ENCODE measurements at regions of chr20 and their contacts with region 1.

Region 1: DNA sequence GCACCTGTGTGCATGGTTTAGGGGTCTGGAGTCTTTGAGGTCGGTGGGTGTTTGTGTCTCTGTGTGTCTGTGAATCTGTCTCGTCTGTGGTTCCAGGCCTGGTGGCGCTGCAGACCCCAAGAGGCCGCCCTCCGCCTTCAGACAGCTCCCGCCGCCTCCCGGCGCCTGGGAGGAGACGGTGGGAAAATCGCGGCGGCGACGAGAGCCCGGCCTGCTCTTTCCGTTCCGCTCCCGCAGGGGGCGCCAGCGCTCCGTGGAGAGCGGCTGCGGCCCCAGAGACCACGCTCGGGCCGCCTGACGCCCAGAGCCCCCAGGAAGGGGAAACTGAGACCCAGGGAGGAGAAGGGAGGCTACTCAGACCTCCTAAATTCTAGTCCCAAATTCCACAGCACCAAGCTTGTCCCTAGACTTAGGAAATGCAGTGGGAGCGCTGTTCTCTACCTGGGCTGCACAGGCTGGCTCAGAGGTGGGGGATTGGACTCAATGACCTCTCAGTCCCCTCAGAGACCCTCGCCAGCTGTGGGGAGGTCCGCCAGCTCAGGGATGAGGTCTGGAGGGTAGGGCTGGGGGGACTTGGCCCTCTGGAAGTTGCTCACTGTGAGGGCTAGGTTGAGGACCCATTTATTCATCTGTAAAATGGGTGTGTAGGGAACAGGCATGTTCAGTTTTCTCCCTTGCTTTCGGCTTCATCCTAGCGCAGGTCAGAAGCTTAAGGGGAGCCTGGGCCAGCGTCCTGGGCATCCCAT is 36.9 kb upstream of the BLCAP start:
- DNase-seq: peak; percentile 52 to 72
- H3K4me3 ChIP-seq: no peak overlapping the region
- H3K27ac ChIP-seq: no peak overlapping the region
- H3K4me1 ChIP-seq: peaks cover 4% of the 10 kb centered on the region
- H3K27me3 ChIP-seq: no peaks in the 10 kb centered on the region
- CTCF ChIP-seq: peak; percentile 37 to 58 (median 52)
- POLR2A ChIP-seq: no peak

Region 2: GRCh38 chr20:37417617-37418467 is 146.7 kb before region 1 on chr20:
- intact Hi-C with region 1: no loop called
- DNase-seq: no peak
- H3K4me3 ChIP-seq: no peak overlapping the region
- H3K27ac ChIP-seq: no peak overlapping the region
- H3K4me1 ChIP-seq: no peaks in the 10 kb centered on the region
- H3K27me3 ChIP-seq: no peaks in the 10 kb centered on the region
- CTCF ChIP-seq: no peak
- POLR2A ChIP-seq: no peak

Region 3: GRCh38 chr20:37615340-37616109 is 51.0 kb after region 1 on chr20:
- intact Hi-C with region 1: no loop called
- DNase-seq: no peak
- H3K4me3 ChIP-seq: no peak overlapping the region
- H3K27ac ChIP-seq: no peak overlapping the region
- H3K4me1 ChIP-seq: no peaks in the 10 kb centered on the region
- H3K27me3 ChIP-seq: no peaks in the 10 kb centered on the region
- CTCF ChIP-seq: peak in 1 of 3 experiments; percentile 27
- POLR2A ChIP-seq: no peak

Region 4: DNA sequence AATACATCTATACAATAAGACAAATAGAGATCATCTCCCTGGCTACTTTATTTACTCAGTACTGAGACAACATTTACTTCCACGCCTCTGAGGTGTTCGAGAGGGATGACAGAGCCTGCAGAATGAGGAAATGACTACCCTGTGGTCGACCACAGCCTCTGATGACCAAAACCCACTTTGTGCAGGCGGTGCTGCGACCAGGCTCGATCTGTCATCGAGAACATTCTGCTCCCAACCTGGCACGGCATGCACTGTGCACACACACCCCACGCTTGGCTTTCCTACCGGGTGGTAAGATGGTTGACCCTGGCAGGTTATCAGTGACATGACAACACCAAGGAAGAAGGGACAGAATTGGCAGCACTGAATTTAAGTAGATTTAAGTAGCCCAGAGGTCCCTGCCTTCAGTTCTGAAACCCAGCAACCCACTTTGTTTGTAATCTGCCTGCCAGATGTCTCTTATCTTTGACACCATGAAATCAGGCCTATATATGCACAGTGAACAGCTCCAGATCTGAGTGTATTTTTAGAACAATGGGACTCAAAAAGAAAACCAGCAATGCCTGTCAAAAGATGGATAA is 426.1 kb after region 1 on chr20:
- intact Hi-C with region 1: loop called (anchors 10 kb)
- DNase-seq: no peak
- H3K4me3 ChIP-seq: no peak overlapping the region
- H3K27ac ChIP-seq: no peak overlapping the region
- H3K4me1 ChIP-seq: peaks cover 36% of the 10 kb centered on the region
- H3K27me3 ChIP-seq: no peaks in the 10 kb centered on the region
- CTCF ChIP-seq: no peak
- POLR2A ChIP-seq: no peak